ENCODE measurements at regions of chr10 and their contacts with region 1.

Region 1: DNA sequence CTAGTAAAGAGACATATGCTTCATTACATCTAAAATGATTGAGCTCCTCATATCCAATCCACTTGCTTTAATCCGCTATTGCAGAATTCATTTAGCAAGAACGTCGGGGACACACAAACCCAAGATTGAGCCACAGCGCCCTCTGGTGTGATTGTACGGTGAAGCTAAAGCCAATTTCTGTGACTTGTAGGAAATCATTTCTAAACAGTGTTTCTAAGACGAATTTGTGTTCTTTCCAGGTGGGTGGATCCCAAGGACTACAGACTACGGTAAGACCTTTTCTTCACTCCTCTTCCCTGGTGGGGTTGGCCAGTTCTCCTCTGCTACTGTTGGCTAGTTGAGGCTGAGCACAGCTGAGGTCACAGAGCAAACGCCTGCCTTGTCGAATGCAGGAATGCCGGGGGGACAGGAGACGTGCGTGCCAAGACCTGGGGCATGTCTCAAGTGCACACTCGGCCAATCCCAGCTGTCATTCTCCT is 5.2 kb downstream of the DMBT1 start:
- DNase-seq: peak; percentile 68
- H3K27ac ChIP-seq: peak overlapping the region; percentile 56; the same call in 1 of the 2 replicates
- CTCF ChIP-seq: peak; percentile 79

Region 2: GRCh38 chr10:122468926-122469781 is 96.6 kb before region 1 on chr10:
- CTCF ChIA-PET with region 1: interaction called, 14 read pairs
- POLR2A ChIA-PET with region 1: no interaction called
- DNase-seq: peak; percentile 98
- H3K27ac ChIP-seq: peak overlapping the region; percentile 98
- CTCF ChIP-seq: no peak

Measured in RWPE1 (cell line).